Activated naive CD8-positive, alpha-beta T cell treated with anti-CD3 and anti-CD28 coated beads, Interleukin-2, amount 10 ng/mL, durations not matched to agents 7 days and 5 days (primary cell): ENCODE measurements at regions of chr14 and their contacts with region 1.

Region 1: GRCh38 chr14:20682435-20683124 is 1.8 kb upstream of the RNASE4 start:
- DNase-seq: peak; percentile 79
- ATAC-seq: peak; percentile 63
- H3K4me3 Mint-ChIP-seq: no peak overlapping the region
- H3K27ac Mint-ChIP-seq: no peak overlapping the region
- H3K4me1 Mint-ChIP-seq: peaks cover 30% of the 10 kb centered on the region
- H3K27me3 Mint-ChIP-seq: peaks cover 4% of the 10 kb centered on the region

Region 2: GRCh38 chr14:20667957-20668356 is 14.6 kb before region 1 on chr14:
- POLR2A ChIA-PET with region 1: interaction called, 22 read pairs
- DNase-seq: no peak
- ATAC-seq: peak; percentile 67
- H3K4me3 Mint-ChIP-seq: peak overlapping the region; percentile 56
- H3K27ac Mint-ChIP-seq: peak overlapping the region; percentile 95
- H3K4me1 Mint-ChIP-seq: peaks cover 34% of the 10 kb centered on the region
- H3K27me3 Mint-ChIP-seq: peaks cover 15% of the 10 kb centered on the region

Region 3: DNA sequence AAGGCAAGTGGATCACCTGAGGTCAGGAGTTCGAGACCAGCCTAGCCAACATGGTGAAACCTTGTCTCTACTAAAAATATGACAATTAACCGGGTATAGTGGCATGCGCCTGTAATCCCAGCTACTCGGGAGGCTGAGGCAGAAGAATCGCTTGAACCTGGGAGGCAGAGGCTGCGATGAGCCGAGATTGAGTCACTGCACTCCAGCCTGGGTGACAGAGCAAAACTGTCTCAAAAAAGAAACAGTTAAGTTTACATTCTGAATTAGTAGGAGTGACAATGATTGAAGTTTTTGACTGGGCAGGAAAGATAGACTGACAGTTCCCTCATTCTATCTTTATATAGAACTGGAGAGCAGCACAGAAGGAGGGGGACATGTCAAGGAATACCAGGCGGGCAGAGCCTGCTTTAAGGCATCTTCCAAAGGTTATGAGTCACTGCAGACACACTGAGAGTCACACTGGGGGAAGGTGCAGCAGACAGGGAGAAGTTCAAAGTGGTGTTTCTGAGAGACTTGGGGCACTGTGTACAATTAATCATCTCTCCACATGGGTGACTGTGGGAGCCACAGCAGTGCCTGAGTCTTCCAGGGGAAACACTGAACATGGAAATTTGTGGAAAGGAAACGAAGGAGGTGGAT is 165.9 kb after region 1 on chr14:
- POLR2A ChIA-PET with region 1: no interaction called
- DNase-seq: no peak
- ATAC-seq: no peak
- H3K4me3 Mint-ChIP-seq: no peak overlapping the region
- H3K27ac Mint-ChIP-seq: no peak overlapping the region
- H3K4me1 Mint-ChIP-seq: no peaks in the 10 kb centered on the region
- H3K27me3 Mint-ChIP-seq: peaks cover 12% of the 10 kb centered on the region